MCF 10A (cell line): ENCODE measurements at regions of chr5 and their contacts with region 1.

Region 1: DNA sequence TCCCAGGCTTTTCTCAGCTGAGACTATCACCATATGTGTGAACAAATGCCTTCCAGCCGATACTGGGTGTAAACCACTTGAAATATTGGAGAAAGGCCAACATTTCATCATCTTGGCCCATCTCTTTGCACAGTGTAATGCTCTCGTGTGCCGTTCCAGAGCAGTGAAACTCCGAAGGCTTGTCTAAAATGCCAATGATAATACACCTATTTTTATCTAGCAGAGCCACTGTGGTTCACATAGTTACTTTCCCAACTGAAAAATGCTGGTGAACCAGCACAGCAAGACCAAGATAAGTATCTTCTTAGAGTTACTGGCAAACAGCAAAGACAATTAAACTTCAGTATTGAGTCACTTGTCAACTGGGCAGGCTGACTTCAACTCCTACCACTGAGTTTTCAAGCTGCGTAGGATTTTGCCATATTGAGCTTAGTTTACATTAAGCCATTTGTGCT is 379.9 kb upstream of the ACTBL2 start:
- DNase-seq: peak; percentile 85
- H3K4me3 Mint-ChIP-seq: no peak overlapping the region
- H3K27ac Mint-ChIP-seq: peak overlapping the region; percentile 49
- H3K4me1 Mint-ChIP-seq: peaks cover 22% of the 10 kb centered on the region
- H3K27me3 Mint-ChIP-seq: no peaks in the 10 kb centered on the region
- CTCF ChIP-seq: no peak

Region 2: DNA sequence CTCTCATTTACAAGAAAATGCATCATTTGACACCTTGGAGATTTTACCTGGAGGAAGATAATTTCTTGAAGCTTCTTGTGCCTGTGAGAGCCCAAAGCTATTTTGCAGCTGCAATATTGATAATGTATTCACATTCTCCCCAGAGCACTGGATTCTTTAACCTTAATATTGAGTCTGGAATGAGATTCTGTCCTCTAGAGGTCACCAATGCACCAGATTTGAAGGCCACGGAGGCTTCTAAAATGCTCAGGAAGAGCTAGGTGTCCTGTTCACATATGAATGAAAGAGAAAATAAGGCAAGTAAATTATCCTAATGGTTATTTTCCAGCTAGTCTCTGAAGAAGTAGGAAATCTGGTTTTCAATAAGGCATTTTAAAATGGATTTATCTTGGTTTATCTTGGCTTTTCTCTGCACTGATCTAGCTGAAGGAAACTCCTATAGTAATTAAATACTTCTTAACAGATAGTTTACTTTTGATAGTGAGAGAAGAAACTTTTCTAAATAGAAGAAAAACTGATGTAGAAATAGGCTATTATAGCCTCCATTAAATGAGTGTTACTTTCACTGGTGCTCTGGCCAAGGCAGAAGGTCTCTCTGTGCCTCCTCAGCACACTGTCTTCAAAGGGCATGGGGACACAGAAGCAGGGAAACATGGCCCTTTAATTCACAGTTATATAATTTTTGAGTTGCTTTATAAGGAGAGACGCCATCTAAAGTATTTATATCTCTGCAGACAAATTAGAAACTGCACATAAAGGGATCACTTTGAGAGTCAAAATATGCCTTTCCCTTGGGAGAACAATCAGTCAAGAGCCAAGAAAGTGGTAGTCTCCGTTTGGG is 82.9 kb before region 1 on chr5:
- CTCF ChIA-PET with region 1: interaction called, 16 read pairs
- POLR2A ChIA-PET with region 1: no interaction called
- intact Hi-C with region 1: no loop called
- DNase-seq: peak; percentile 78
- H3K4me3 Mint-ChIP-seq: no peak overlapping the region
- H3K27ac Mint-ChIP-seq: no peak overlapping the region
- H3K4me1 Mint-ChIP-seq: peaks cover 6% of the 10 kb centered on the region
- H3K27me3 Mint-ChIP-seq: no peaks in the 10 kb centered on the region
- CTCF ChIP-seq: peak; percentile 64

Region 3: DNA sequence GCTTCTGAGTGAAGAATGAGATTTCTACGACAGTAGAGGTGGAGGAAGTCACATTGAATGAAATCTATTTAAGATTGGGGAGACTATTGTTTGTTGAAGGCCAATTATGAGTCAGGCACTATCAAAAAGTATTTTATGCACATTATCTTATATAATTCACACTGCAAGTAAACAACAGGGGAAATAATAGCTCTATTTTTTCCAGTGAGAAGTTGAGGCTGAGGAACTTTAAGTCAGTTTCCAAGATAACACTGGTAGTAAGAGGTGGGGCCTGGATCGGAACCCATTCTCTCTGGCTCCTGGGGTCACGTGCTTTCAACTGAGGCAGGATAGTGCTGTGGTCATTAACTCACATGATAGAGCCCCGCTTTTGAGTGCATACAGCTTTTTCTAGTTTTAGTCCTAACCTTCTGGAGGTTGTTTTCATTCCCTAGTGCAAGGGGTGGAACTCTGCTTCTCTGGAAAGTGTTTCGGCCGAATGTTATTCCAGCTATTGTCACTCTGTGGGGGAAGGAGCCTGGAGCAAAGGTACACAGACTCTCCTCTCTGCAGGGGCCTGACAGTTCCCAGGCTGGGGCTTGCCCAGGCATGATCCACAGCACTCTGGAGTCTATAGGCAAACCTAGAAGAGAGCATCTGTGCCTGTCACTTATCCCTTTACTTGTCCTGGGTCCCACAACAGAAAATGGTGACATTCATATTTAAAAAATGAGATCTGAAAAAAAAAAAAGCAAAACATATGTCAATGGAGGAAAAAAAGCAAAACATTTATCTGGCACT is 27.5 kb before region 1 on chr5:
- CTCF ChIA-PET with region 1: interaction called, 4 read pairs
- POLR2A ChIA-PET with region 1: interaction called, 17 read pairs
- intact Hi-C with region 1: no loop called
- DNase-seq: peak; percentile 78
- H3K4me3 Mint-ChIP-seq: no peak overlapping the region
- H3K27ac Mint-ChIP-seq: no peak overlapping the region
- H3K4me1 Mint-ChIP-seq: peaks cover 43% of the 10 kb centered on the region
- H3K27me3 Mint-ChIP-seq: no peaks in the 10 kb centered on the region
- CTCF ChIP-seq: no peak

Region 4: DNA sequence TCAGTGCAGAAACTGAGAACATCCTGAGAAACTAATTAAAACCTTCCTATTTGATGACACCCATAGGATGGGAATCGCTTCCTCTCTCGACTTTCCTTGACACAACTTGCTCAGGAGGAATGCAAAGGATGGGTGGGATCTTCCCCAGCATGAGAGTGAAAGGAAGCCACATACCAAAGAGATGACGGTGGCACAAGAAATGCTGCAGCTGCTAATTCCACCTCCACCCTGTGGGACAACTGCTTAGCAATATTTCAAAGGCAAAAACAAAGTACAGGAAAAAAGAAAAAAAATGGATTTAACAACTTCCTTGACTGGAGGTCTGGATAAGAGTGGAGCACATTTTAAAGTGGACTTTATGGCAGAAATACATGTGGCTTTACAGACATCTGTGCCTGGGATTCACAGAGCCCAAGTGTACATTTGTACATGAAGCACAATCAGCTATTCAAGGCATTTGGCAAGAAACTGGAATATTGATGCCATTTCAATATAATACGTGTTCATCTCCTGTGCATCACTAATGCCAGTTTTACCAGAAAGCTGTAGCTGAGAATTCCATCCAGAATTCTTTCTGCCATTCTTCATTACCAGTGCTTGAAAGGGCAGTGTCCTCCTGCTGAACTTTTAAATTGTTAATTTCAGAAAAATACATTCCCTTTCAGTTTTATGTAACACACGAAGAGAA is 20.7 kb before region 1 on chr5:
- CTCF ChIA-PET with region 1: interaction called, 5 read pairs
- POLR2A ChIA-PET with region 1: interaction called, 17 read pairs
- intact Hi-C with region 1: no loop called
- DNase-seq: peak; percentile 82
- H3K4me3 Mint-ChIP-seq: peak overlapping the region; percentile 51
- H3K27ac Mint-ChIP-seq: peak overlapping the region; percentile 47
- H3K4me1 Mint-ChIP-seq: peaks cover 61% of the 10 kb centered on the region
- H3K27me3 Mint-ChIP-seq: no peaks in the 10 kb centered on the region
- CTCF ChIP-seq: no peak

Region 5: DNA sequence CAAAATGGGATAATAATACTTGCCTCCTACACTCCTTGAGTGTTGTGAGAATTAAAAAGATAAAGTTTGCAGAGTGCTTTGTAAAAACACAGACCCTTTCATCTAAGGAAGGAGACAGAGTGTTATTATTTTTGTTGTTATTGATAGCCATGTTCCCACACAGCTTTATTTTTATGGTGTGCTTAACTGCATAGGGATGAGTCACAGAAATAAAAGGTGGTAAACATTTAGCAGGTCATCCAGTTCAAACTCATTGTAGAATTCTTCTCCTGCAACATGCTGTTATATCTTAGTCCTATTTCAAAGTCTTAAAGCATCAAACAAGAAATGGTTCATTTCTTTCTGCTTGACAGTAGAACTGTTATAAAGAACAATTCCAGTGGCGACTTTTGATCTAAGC is 12.4 kb before region 1 on chr5:
- CTCF ChIA-PET with region 1: interaction called, 4 read pairs
- POLR2A ChIA-PET with region 1: interaction called, 10 read pairs
- intact Hi-C with region 1: no loop called
- DNase-seq: no peak
- H3K4me3 Mint-ChIP-seq: no peak overlapping the region
- H3K27ac Mint-ChIP-seq: no peak overlapping the region
- H3K4me1 Mint-ChIP-seq: peaks cover 8% of the 10 kb centered on the region
- H3K27me3 Mint-ChIP-seq: no peaks in the 10 kb centered on the region
- CTCF ChIP-seq: no peak

Region 6: GRCh38 chr5:57900381-57900944 is 38.0 kb after region 1 on chr5:
- CTCF ChIA-PET with region 1: no interaction called
- POLR2A ChIA-PET with region 1: no interaction called
- intact Hi-C with region 1: no loop called
- DNase-seq: no peak
- H3K4me3 Mint-ChIP-seq: no peak overlapping the region
- H3K27ac Mint-ChIP-seq: no peak overlapping the region
- H3K4me1 Mint-ChIP-seq: no peaks in the 10 kb centered on the region
- H3K27me3 Mint-ChIP-seq: no peaks in the 10 kb centered on the region
- CTCF ChIP-seq: no peak